CD4-positive, alpha-beta T cell (primary cell): ENCODE measurements at regions of chr19 and their contacts with region 1.

Region 1: GRCh38 chr19:12965017-12965811 is 4.2 kb upstream of the DAND5 start:
- DNase-seq: peak; percentile 64 to 89 (median 78)
- ATAC-seq: peak; percentile 95
- H3K4me3 ChIP-seq: peak overlapping the region; percentile 59
- H3K4me3 Mint-ChIP-seq: peak overlapping the region; percentile 82
- H3K27ac ChIP-seq: no peak overlapping the region
- H3K27ac Mint-ChIP-seq: no peak overlapping the region
- H3K4me1 ChIP-seq: peaks cover 13% of the 10 kb centered on the region
- H3K4me1 Mint-ChIP-seq: peaks cover 9% of the 10 kb centered on the region
- H3K27me3 ChIP-seq: no peaks in the 10 kb centered on the region
- H3K27me3 Mint-ChIP-seq: no peaks in the 10 kb centered on the region
- CTCF ChIP-seq: peak; percentile 99

Region 2: GRCh38 chr19:12465211-12465610 is 500.0 kb before region 1 on chr19:
- CTCF ChIA-PET with region 1: no interaction called
- POLR2A ChIA-PET with region 1: no interaction called
- intact Hi-C with region 1: no loop called
- DNase-seq: no peak
- ATAC-seq: no peak
- H3K4me3 ChIP-seq: no peak overlapping the region
- H3K4me3 Mint-ChIP-seq: no peak overlapping the region
- H3K27ac ChIP-seq: no peak overlapping the region
- H3K27ac Mint-ChIP-seq: no peak overlapping the region
- H3K4me1 ChIP-seq: no peaks in the 10 kb centered on the region
- H3K4me1 Mint-ChIP-seq: no peaks in the 10 kb centered on the region
- H3K27me3 ChIP-seq: no peaks in the 10 kb centered on the region
- H3K27me3 Mint-ChIP-seq: no peaks in the 10 kb centered on the region
- CTCF ChIP-seq: no peak

Region 3: DNA sequence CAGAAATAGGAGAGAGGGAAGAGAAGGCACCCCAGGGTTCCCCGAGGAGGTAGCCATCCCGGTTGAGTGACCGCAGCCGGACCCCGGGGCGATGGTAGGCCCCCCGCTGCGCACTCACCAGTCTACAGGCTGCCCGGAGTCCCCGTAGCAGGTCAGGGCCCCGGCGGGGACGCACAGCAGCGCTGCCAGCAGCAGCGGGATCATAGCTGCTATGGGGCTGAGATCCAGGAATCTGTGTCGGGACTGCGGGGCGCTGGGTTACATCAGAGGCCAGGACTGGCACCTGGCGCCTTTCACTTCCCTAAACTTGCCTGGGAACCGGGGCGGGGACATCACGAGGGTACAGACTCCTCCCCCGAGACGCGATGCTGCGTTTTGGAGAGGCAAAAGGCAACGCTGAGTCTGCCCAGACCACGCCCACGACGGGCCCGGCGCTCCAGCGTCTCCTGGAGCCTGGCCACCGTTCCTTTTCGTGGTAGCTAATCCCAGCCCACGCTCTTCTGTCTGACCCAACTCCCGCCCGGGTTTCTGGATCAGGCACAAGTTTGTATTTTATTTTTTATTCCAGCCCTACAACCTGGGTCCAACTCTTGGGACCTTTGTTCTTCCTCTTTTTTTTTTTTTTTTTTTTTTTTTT is 83.9 kb before region 1 on chr19 and contains the start of gene DNASE2:
- CTCF ChIA-PET with region 1: interaction called, 17 read pairs
- POLR2A ChIA-PET with region 1: interaction called, 17 read pairs
- intact Hi-C with region 1: loop called (anchors 1 kb)
- DNase-seq: peak; percentile 73 to 95 (median 86)
- ATAC-seq: peak; percentile 74
- H3K4me3 ChIP-seq: peak within 1 kb of the TSS; percentile 89
- H3K4me3 Mint-ChIP-seq: peak within 1 kb of the TSS; percentile 89
- H3K27ac ChIP-seq: peak within 1 kb of the TSS; percentile 46 to 58
- H3K27ac Mint-ChIP-seq: peak within 1 kb of the TSS; percentile 86
- H3K4me1 ChIP-seq: peaks cover 52% of the 10 kb centered on the region
- H3K4me1 Mint-ChIP-seq: peaks cover 23% of the 10 kb centered on the region
- H3K27me3 ChIP-seq: no peaks in the 10 kb centered on the region
- H3K27me3 Mint-ChIP-seq: no peaks in the 10 kb centered on the region
- CTCF ChIP-seq: no peak
- total RNA-seq, gene DNASE2: 10.4 to 11.1 TPM

Region 4: GRCh38 chr19:12921047-12921446 is 44.2 kb before region 1 on chr19:
- CTCF ChIA-PET with region 1: interaction called, 11 read pairs
- POLR2A ChIA-PET with region 1: interaction called, 10 read pairs
- intact Hi-C with region 1: no loop called
- DNase-seq: no peak
- ATAC-seq: no peak
- H3K4me3 ChIP-seq: no peak overlapping the region
- H3K4me3 Mint-ChIP-seq: no peak overlapping the region
- H3K27ac ChIP-seq: no peak overlapping the region
- H3K27ac Mint-ChIP-seq: peak overlapping the region; percentile 90
- H3K4me1 ChIP-seq: peaks cover 16% of the 10 kb centered on the region
- H3K4me1 Mint-ChIP-seq: peaks cover 13% of the 10 kb centered on the region
- H3K27me3 ChIP-seq: no peaks in the 10 kb centered on the region
- H3K27me3 Mint-ChIP-seq: no peaks in the 10 kb centered on the region
- CTCF ChIP-seq: no peak

Region 5: DNA sequence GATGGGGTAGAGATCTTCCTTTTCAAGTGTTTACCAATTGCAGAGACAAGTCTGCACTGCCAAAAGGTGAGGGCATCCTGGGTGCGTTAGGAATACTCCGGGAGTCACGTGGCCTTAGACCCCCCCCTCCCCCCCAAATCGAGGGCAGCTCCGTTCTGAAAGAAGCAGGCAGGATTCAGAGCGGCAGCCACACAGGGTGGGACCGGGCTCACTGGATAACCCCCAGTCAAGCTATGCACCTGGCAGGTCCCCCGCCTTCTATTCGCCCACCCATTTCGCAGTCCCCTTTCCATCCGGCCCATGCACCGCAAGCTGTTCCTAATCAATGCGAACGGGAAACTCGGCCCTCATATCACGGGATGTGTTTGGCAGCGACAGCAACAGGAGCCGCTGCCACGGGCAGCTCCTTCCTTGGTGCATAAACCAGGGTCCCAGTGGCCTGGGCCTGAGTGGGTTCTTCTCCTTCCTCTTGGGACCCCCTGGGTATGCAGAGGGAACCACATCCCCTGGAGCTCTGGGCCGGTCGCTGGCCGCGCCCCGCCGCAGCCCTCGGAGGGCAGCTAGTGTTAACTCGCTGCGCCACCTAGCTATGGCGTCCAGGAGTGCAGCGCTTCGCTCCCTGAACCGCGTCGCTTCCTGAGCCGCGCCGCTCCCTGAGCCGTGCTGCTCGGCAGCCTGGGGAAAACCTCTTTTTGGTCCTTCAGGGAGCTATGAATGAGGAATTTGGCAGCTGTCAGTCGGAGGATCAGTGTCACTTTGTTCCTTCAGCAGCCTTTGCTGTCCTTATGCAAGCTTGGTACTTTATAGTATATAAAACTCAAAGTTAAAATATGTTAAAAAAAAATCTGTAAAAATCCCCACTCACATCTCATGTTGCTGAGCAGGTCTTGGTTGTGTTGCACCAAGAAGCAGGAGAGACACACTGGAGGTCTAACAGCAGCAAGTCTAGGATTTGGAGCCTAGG is 96.0 kb after region 1 on chr19:
- CTCF ChIA-PET with region 1: interaction called, 26 read pairs
- POLR2A ChIA-PET with region 1: interaction called, 8 read pairs
- intact Hi-C with region 1: no loop called
- DNase-seq: peak; percentile 58 to 86 (median 73)
- ATAC-seq: peak; percentile 99
- H3K4me3 ChIP-seq: peak overlapping the region; percentile 54
- H3K4me3 Mint-ChIP-seq: peak overlapping the region; percentile 81
- H3K27ac ChIP-seq: no peak overlapping the region
- H3K27ac Mint-ChIP-seq: no peak overlapping the region
- H3K4me1 ChIP-seq: peaks cover 16% of the 10 kb centered on the region
- H3K4me1 Mint-ChIP-seq: peaks cover 8% of the 10 kb centered on the region
- H3K27me3 ChIP-seq: peaks cover 11 to 16% of the 10 kb centered on the region in 2 experiments
- H3K27me3 Mint-ChIP-seq: peaks cover 22% of the 10 kb centered on the region
- CTCF ChIP-seq: peak; percentile 96

Region 6: DNA sequence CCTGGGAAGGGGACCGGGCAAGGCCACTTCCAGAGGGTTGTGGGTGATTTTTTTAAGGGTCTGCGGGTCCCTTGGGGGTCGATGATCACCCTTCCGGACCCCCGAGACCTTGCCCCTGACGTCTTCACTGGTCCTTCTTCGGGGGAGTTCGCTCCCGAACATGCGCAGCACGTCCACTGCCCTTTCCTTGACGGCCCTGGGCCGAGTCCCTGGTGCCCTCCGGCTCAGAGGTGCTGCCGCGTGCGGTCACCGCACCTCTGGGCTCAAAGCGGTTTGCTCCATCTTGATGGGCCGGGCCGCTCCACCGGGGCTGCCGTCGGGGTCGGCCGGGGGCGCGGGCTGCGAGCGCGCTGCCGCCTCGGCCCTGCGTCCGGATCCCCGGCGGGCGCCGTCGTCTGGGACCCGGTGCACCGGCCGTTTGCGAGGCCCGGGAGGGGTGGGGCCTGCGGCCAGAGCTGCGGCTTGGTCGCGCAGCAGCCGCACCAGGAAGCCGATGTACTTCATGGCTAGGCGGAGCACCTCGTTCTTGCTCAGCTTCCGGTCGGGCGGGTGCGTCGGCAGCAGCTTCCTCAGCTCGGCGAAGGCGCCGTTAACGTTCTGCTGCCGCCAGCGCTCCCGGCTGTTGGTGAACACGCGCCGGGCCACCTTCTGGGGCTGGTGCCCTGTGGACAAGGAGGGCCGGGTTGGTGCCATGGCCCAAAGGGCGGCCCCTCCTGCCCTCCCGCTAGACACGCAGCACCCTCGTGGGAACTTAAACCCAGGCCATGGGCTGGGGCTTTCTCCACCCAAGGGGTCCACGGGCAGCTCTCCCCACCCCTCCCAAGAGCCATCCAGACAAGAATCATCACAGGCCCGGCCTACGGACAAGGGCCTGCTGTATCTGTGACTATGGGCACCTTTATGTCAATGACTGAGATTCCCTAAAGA is 134.1 kb after region 1 on chr19:
- CTCF ChIA-PET with region 1: interaction called, 42 read pairs
- POLR2A ChIA-PET with region 1: interaction called, 9 read pairs
- intact Hi-C with region 1: no loop called
- DNase-seq: peak; percentile 68 to 93 (median 80)
- ATAC-seq: peak; percentile 70
- H3K4me3 ChIP-seq: peak overlapping the region; percentile 59
- H3K4me3 Mint-ChIP-seq: peak overlapping the region; percentile 85
- H3K27ac ChIP-seq: peak overlapping the region; percentile 87 to 89
- H3K27ac Mint-ChIP-seq: peak overlapping the region; percentile 91
- H3K4me1 ChIP-seq: peaks cover 99% of the 10 kb centered on the region
- H3K4me1 Mint-ChIP-seq: peaks cover 62% of the 10 kb centered on the region
- H3K27me3 ChIP-seq: peaks cover 23% of the 10 kb centered on the region in 2 experiments
- H3K27me3 Mint-ChIP-seq: peaks cover 26% of the 10 kb centered on the region
- CTCF ChIP-seq: no peak